K562 (cell line): ENCODE measurements at regions of chr4 and their contacts with region 1.

Region 1: GRCh38 chr4:85370430-85371032 is 104.4 kb upstream of the ARHGAP24 start:
- DNase-seq: peak; percentile 9 to 51 (median 16)
- ATAC-seq: peak; percentile 90
- H3K4me3 ChIP-seq: no peak overlapping the region
- H3K27ac ChIP-seq: no peak overlapping the region
- H3K4me1 ChIP-seq: no peaks in the 10 kb centered on the region
- H3K27me3 ChIP-seq: no peaks in the 10 kb centered on the region
- CTCF ChIP-seq: peak; percentile 64 to 68 (median 68)
- EP300 ChIP-seq: no peak
- POLR2A ChIP-seq: no peak
- RAD21 ChIP-seq: peak; percentile 40 to 61; a peak in 3 of 4 replicates

Region 2: GRCh38 chr4:85084380-85085094 is 286.0 kb before region 1 on chr4:
- CTCF ChIA-PET with region 1: no interaction called
- POLR2A ChIA-PET with region 1: no interaction called
- in situ Hi-C with region 1: no loop called
- intact Hi-C with region 1: loop called (anchors 1 kb)
- DNase-seq: peak; percentile 12 to 69 (median 32)
- ATAC-seq: peak; percentile 76
- H3K4me3 ChIP-seq: no peak overlapping the region
- H3K27ac ChIP-seq: no peak overlapping the region
- H3K4me1 ChIP-seq: no peaks in the 10 kb centered on the region
- H3K27me3 ChIP-seq: no peaks in the 10 kb centered on the region
- CTCF ChIP-seq: peak; percentile 38 to 68 (median 55); a peak in 5 of 6 replicates
- EP300 ChIP-seq: no peak
- POLR2A ChIP-seq: no peak
- RAD21 ChIP-seq: peak; percentile 53 to 73

Region 3: DNA sequence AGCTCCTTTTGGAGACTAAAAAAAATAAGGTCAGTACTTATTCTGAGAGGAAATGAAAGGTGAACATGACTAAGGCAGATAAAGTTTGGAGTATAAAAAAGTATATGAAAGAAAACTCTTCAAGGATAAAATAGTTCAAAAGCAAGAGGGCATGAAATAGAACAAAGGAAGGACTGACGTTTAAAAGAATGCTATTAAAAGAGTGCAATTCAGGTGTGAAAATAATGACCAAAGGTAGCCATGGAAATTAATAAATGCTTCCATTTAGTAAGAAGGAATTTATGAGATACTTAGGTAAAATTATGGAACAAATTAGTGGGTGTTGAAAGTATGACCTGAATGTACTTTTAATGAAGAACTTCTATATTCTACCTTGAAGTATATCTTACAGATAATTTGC is 275.8 kb before region 1 on chr4:
- CTCF ChIA-PET with region 1: no interaction called
- POLR2A ChIA-PET with region 1: no interaction called
- in situ Hi-C with region 1: no loop called
- intact Hi-C with region 1: no loop called
- DNase-seq: no peak
- ATAC-seq: no peak
- H3K4me3 ChIP-seq: no peak overlapping the region
- H3K27ac ChIP-seq: no peak overlapping the region
- H3K4me1 ChIP-seq: no peaks in the 10 kb centered on the region
- H3K27me3 ChIP-seq: no peaks in the 10 kb centered on the region
- CTCF ChIP-seq: no peak
- EP300 ChIP-seq: no peak
- POLR2A ChIP-seq: no peak
- RAD21 ChIP-seq: no peak